AG04449 (cell line): ENCODE measurements at regions of chr9 and their contacts with region 1.

Region 1: GRCh38 chr9:34252670-34253459 is 74.0 kb downstream of the UBAP1 start:
- DNase-seq: no peak
- H3K4me3 ChIP-seq: no peak overlapping the region
- CTCF ChIP-seq: peak; percentile 82

Region 2: GRCh38 chr9:34001298-34001697 is 251.6 kb before region 1 on chr9:
- CTCF ChIA-PET with region 1: no interaction called
- POLR2A ChIA-PET with region 1: no interaction called
- DNase-seq: no peak
- H3K4me3 ChIP-seq: no peak overlapping the region
- CTCF ChIP-seq: no peak

Region 3: DNA sequence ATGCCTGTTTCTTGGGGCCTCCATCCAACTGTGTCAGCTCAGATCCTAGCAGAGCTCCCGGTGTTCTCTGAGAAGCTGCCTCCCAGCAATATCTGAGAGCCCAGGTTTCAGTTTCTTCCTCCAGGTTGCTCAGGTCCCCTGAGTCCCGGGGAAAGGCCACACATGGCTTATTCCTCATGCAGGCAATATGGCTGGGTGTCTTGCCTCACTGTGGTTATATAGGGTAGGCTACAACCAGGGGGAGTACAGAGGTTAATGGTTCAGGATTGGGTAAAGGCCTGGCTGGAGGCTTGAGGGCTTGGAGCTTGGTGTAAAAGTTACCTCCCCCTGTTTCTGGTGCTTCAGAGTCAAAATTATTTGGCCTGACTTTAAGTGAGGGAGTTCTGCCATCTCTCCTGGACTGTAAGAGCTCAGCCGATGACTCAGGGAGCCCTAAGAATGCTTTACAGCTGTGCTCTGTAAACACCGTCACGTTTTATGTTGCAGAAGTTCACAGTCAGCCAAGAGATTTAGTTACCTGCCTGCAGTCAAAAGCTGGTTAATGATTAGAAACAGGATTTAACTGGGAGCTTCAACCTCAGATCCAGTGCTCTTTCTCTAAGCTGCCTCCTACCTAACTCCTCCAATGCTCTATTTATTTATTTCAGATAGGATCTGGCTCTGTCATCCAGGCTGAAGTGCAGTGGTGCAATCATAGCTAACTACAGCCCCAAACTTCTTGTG is 179.8 kb before region 1 on chr9:
- CTCF ChIA-PET with region 1: interaction called, 62 read pairs
- POLR2A ChIA-PET with region 1: no interaction called
- DNase-seq: peak; percentile 44
- H3K4me3 ChIP-seq: no peak overlapping the region
- CTCF ChIP-seq: no peak

Region 4: GRCh38 chr9:34114436-34114835 is 138.4 kb before region 1 on chr9:
- CTCF ChIA-PET with region 1: interaction called, 18 read pairs
- POLR2A ChIA-PET with region 1: no interaction called
- DNase-seq: no peak
- H3K4me3 ChIP-seq: no peak overlapping the region
- CTCF ChIP-seq: no peak

Region 5: DNA sequence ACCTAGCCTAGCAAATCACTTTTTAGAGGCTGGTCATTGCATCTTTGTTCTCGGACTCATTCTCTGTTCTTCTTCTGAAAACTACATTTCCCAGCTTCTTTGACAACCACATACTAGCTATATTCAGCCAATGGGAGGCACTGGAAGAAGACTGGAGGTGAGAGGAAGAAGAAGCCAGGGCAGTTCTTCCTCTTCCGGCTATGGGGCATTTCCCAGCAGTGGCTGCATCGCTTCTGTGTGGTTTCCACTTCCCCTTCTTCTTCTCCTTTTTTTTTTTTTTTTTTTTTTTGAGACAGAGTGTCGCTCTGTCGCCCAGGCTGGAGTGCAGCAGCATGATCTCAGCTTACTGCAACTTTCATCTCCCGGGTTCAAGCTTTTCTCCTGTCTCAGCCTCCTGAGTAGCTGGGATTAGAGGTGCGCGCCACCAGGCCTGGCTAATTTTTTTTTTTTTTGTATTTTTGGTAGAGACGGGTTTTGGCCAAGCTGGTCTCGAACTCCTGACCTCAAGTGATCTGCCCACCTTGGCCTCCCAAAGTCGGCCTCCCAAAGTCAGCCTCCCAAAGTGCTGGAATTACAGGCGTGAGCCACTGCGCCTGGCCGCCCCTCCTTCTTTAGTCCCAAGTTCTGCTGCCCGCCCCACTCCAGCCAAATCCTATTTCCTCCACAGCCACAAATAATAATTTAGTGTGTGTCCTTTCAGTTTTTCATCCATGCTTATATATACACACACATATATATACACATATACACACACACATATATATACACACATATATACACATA is 80.9 kb before region 1 on chr9:
- CTCF ChIA-PET with region 1: interaction called, 10 read pairs
- POLR2A ChIA-PET with region 1: no interaction called
- DNase-seq: no peak
- H3K4me3 ChIP-seq: no peak overlapping the region
- CTCF ChIP-seq: no peak

Region 6: DNA sequence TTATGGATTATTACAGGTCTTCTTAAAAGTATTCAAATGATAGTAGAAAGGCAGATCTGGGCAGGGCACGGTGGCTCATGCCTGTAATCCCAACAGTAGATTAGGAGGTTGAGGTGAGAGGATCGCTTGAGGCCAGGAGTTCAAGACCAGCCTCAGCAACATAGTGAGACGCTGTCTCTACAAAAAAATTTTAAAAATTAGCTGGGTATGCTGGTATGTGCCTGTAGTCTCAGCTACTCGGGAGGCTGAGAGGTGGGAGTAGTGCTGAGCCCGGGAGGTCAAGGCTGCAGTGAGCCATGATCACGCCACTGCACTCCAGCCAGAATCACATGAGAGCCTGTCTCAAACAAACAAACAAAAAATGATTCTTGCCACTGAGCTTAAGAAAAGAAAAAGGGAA is 30.4 kb before region 1 on chr9:
- CTCF ChIA-PET with region 1: interaction called, 64 read pairs
- POLR2A ChIA-PET with region 1: interaction called, 5 read pairs
- DNase-seq: no peak
- H3K4me3 ChIP-seq: no peak overlapping the region
- CTCF ChIP-seq: no peak

Region 7: GRCh38 chr9:34242830-34243229 is 10.0 kb before region 1 on chr9:
- CTCF ChIA-PET with region 1: interaction called, 72 read pairs
- POLR2A ChIA-PET with region 1: no interaction called
- DNase-seq: no peak
- H3K4me3 ChIP-seq: no peak overlapping the region
- CTCF ChIP-seq: no peak

Region 8: GRCh38 chr9:34376596-34377403 is 123.9 kb after region 1 on chr9 and contains the start of gene MYORG:
- CTCF ChIA-PET with region 1: interaction called, 13 read pairs
- POLR2A ChIA-PET with region 1: no interaction called
- DNase-seq: no peak
- H3K4me3 ChIP-seq: peak within 1 kb of the TSS; percentile 74
- CTCF ChIP-seq: no peak